ENCODE measurements at regions of chr9 and their contacts with region 1.

Region 1: GRCh38 chr9:92652461-92652860 is 17.5 kb downstream of the IPPK start:
- DNase-seq: no peak
- H3K4me3 ChIP-seq: no peak overlapping the region
- H3K27ac ChIP-seq: no peak overlapping the region
- H3K4me1 ChIP-seq: no peaks in the 10 kb centered on the region
- H3K27me3 ChIP-seq: no peaks in the 10 kb centered on the region
- CTCF ChIP-seq: no peak

Region 2: DNA sequence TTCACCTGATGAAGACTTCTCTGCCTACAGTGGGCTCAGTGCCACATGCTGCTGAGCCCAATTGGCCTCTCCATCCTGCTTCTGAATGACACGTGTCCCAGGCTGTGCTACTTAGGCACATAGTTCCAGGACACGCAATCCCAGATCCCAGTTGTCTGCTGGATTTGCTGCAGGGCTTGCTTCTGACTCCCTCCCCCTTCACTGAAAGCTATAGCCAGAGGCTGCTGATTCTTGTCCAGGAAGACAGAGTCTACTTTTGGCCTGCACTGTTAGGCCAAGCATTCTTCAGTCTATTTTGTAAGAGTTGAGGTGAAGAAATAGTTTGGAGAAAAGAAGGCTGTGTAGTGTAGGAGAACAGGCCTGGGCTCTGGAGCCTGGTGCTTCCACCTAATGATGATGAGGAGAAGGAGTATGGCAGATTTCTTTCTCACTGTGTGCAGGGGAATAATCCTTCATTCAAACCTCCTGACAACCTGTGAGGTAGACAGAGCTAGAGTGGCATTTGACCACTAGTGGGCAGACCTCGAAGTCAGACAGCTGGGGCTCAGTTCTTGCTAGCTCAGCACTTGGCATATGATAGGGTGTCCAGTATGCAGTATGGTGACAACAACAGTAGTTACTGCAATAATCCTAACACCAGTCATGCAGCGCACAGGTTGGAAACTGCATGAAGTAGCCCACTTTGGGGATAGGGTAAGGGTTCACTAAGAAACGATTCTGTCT is 150.6 kb before region 1 on chr9:
- CTCF ChIA-PET with region 1: no interaction called
- POLR2A ChIA-PET with region 1: interaction called, 11 read pairs
- intact Hi-C with region 1: no loop called
- DNase-seq: peak; percentile 30
- H3K4me3 ChIP-seq: no peak overlapping the region
- H3K27ac ChIP-seq: no peak overlapping the region
- H3K4me1 ChIP-seq: no peaks in the 10 kb centered on the region
- H3K27me3 ChIP-seq: no peaks in the 10 kb centered on the region
- CTCF ChIP-seq: peak; percentile 65